CD4-positive, alpha-beta memory T cell (primary cell): ENCODE measurements at regions of chr6 and their contacts with region 1.

Region 1: DNA sequence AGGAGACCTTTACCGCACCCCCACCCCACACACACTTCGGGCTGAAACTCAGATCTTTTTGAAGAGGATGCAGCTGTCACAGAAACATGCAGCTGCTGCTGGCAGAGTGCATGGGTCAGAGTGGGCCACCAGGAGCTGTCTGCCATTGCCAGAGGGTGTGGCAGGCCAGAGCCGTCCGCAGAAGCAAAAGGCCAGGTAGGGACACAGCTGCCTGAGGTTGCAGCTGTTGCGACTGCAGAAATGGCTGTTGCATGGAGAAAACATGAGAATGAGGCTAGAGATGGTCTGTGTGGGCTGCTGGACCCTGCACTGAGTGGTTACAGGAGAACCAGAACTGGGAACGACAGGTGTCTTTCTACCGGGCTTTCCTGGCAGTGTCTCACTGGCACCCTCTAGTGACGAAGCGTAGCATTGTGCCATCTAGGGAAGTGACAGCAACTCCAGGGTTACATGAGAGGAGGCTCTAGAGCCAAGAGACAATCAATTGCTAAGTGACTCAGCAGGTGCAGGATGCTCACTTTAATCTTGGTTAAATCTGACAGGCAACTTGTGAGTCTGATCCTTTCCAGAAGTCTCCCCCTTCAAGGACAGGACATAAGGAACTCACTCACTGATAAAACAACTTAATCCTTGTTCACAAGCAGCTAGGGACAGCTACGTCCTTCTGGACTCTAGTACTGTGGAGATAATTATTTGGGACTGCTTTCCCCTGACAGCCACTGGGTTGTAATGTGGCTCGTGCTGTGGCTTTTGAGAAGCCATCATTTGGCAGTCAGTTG is 29.1 kb upstream of the SERPINB9 start:
- DNase-seq: peak; percentile 79 to 87 (median 81)
- H3K4me3 ChIP-seq: no peak overlapping the region
- H3K4me3 Mint-ChIP-seq: peak overlapping the region in 3 of 8 donors; percentile 33 to 53 (median 41)
- H3K27ac ChIP-seq: no peak overlapping the region
- H3K27ac Mint-ChIP-seq: peak overlapping the region in 4 of 7 donors; percentile 4 to 60 (median 41)
- H3K4me1 ChIP-seq: peaks cover 21% of the 10 kb centered on the region
- H3K4me1 Mint-ChIP-seq: peaks cover 18 to 23% (median 22%) of the 10 kb centered on the region in 4 donors
- H3K27me3 ChIP-seq: no peaks in the 10 kb centered on the region
- H3K27me3 Mint-ChIP-seq: no peaks in the 10 kb centered on the region

Region 2: GRCh38 chr6:2765166-2765895 is 166.8 kb before region 1 on chr6 and contains the start of gene WRNIP1:
- CTCF ChIA-PET with region 1: interaction called, 8 read pairs
- POLR2A ChIA-PET with region 1: interaction called, 6 read pairs
- intact Hi-C with region 1: loop called (anchors 10 kb)
- DNase-seq: peak; percentile 95 to 98 (median 98)
- H3K4me3 ChIP-seq: peak within 1 kb of the TSS; percentile 63 to 79
- H3K4me3 Mint-ChIP-seq: peak within 1 kb of the TSS; percentile 93 to 97 (median 95)
- H3K27ac ChIP-seq: peak within 1 kb of the TSS; percentile 90
- H3K27ac Mint-ChIP-seq: peak within 1 kb of the TSS; percentile 98 to 100 (median 99)
- H3K4me1 ChIP-seq: peaks cover 45% of the 10 kb centered on the region
- H3K4me1 Mint-ChIP-seq: peaks cover 33 to 63% (median 43%) of the 10 kb centered on the region in 4 donors
- H3K27me3 ChIP-seq: no peaks in the 10 kb centered on the region
- H3K27me3 Mint-ChIP-seq: peaks cover 0 to 1% of the 10 kb centered on the region in 2 donors
- total RNA-seq, gene WRNIP1: 41.1 to 42.7 TPM

Region 3: GRCh38 chr6:2891768-2892170 is 40.4 kb before region 1 on chr6:
- CTCF ChIA-PET with region 1: interaction called, 11 read pairs
- POLR2A ChIA-PET with region 1: interaction called, 3 read pairs
- intact Hi-C with region 1: no loop called
- DNase-seq: peak; percentile 79 to 94 (median 85)
- H3K4me3 ChIP-seq: no peak overlapping the region
- H3K4me3 Mint-ChIP-seq: peak overlapping the region; percentile 77 to 88 (median 81)
- H3K27ac ChIP-seq: peak overlapping the region; percentile 49
- H3K27ac Mint-ChIP-seq: peak overlapping the region; percentile 91 to 96 (median 95)
- H3K4me1 ChIP-seq: peaks cover 55% of the 10 kb centered on the region
- H3K4me1 Mint-ChIP-seq: peaks cover 40 to 75% (median 60%) of the 10 kb centered on the region in 4 donors
- H3K27me3 ChIP-seq: no peaks in the 10 kb centered on the region
- H3K27me3 Mint-ChIP-seq: no peaks in the 10 kb centered on the region

Region 4: DNA sequence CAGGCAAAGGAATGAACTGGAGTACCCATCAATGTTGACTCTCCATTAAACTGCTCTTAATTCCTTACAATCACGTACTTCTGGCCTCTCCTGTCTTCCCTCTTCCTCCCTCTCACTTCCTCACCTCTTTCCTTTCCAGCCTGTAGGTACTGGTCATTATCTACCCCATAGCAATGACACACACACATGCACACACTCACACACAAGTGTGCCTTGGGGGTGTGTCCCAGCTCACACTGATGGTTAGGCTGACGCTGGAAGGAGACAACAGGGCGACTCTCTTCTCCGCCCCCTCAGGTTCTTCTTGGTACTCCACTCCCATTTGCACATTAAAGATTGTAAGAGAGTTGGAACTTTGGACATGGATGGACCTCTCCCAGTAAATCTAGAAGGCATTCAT is 15.1 kb before region 1 on chr6:
- CTCF ChIA-PET with region 1: interaction called, 29 read pairs
- POLR2A ChIA-PET with region 1: interaction called, 6 read pairs
- intact Hi-C with region 1: no loop called
- DNase-seq: no peak
- H3K4me3 ChIP-seq: no peak overlapping the region
- H3K4me3 Mint-ChIP-seq: no peak overlapping the region
- H3K27ac ChIP-seq: no peak overlapping the region
- H3K27ac Mint-ChIP-seq: no peak overlapping the region
- H3K4me1 ChIP-seq: peaks cover 11% of the 10 kb centered on the region
- H3K4me1 Mint-ChIP-seq: peaks cover 7 to 12% (median 8%) of the 10 kb centered on the region in 4 donors
- H3K27me3 ChIP-seq: no peaks in the 10 kb centered on the region
- H3K27me3 Mint-ChIP-seq: peaks cover 0 to 2% of the 10 kb centered on the region in 2 donors

Region 5: DNA sequence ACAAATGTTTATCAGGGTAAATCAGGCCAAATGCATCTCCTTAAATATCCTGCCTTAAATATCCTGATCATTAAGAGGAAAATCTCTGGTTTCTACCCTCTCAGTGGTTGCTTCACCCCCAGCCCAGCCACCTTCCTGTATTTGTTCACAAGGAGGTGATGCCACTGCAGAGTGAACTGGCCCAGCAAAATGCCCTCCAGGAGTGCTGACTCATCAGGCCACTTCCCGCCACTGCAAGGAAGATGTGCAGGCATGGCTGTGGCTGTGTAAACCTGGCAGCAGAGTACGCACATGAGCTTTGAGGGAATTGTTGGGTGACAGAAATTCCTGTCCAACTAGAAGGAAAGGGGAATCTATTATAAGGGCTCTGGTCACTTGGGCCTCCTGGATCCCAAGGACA is 81.3 kb after region 1 on chr6:
- CTCF ChIA-PET with region 1: no interaction called
- POLR2A ChIA-PET with region 1: no interaction called
- intact Hi-C with region 1: no loop called
- DNase-seq: no peak
- H3K4me3 ChIP-seq: no peak overlapping the region
- H3K4me3 Mint-ChIP-seq: no peak overlapping the region
- H3K27ac ChIP-seq: no peak overlapping the region
- H3K27ac Mint-ChIP-seq: peak overlapping the region in 4 of 7 donors; percentile 9 to 59 (median 37)
- H3K4me1 ChIP-seq: no peaks in the 10 kb centered on the region
- H3K4me1 Mint-ChIP-seq: peaks cover 0 to 16% (median 6%) of the 10 kb centered on the region in 4 donors
- H3K27me3 ChIP-seq: no peaks in the 10 kb centered on the region
- H3K27me3 Mint-ChIP-seq: no peaks in the 10 kb centered on the region

Region 6: DNA sequence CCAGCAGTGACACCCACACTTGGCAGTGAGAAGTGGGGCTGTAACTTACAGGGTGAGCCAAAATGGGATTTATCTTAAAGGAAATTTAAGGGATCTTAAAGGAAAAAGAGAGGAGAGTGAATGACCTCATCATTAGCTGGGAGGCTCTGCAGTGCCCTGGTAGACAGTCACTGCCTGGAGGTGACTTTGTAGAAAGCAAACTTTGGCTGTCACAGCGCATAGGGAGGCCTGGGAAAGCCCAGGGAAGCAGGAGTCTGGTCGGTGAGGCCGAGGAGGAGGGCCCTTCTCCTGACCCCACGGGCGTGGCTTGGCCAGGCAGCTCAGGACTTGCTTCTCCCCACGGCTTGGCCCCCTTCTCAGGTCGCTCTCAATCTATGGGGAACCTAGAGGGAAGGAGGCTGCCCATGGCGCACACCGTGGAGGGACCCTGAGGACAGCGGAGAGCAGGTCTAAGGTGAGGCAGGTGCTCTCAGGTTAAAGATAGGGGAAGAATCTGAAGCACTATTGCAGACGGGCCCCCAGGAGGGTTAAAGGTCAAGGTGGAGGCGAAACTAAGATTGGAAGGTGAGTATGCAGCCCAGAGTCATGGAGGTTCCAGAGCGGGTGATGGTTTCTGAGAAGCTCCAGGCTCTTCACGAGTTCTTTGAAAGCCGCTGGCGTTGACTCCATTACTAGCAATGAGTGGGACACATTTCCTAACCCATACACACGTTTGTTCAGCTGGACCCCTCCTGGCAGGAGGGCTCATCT is 120.5 kb after region 1 on chr6:
- CTCF ChIA-PET with region 1: interaction called, 5 read pairs
- POLR2A ChIA-PET with region 1: interaction called, 3 read pairs
- intact Hi-C with region 1: loop called (anchors 5 kb)
- DNase-seq: no peak
- H3K4me3 ChIP-seq: peak overlapping the region in 1 of 2 donors; percentile 61
- H3K4me3 Mint-ChIP-seq: peak overlapping the region; percentile 53 to 86 (median 78)
- H3K27ac ChIP-seq: peak overlapping the region; percentile 44
- H3K27ac Mint-ChIP-seq: peak overlapping the region in 6 of 7 donors; percentile 65 to 85 (median 80)
- H3K4me1 ChIP-seq: peaks cover 13% of the 10 kb centered on the region
- H3K4me1 Mint-ChIP-seq: peaks cover 6 to 32% (median 16%) of the 10 kb centered on the region in 4 donors
- H3K27me3 ChIP-seq: no peaks in the 10 kb centered on the region
- H3K27me3 Mint-ChIP-seq: no peaks in the 10 kb centered on the region